ENCODE measurements at regions of chr1 and their contacts with region 1.

Region 1: GRCh38 chr1:201792534-201793305 is 36.2 kb upstream of the IPO9 start:
- DNase-seq: peak; percentile 85
- ATAC-seq: peak; percentile 84

Region 2: DNA sequence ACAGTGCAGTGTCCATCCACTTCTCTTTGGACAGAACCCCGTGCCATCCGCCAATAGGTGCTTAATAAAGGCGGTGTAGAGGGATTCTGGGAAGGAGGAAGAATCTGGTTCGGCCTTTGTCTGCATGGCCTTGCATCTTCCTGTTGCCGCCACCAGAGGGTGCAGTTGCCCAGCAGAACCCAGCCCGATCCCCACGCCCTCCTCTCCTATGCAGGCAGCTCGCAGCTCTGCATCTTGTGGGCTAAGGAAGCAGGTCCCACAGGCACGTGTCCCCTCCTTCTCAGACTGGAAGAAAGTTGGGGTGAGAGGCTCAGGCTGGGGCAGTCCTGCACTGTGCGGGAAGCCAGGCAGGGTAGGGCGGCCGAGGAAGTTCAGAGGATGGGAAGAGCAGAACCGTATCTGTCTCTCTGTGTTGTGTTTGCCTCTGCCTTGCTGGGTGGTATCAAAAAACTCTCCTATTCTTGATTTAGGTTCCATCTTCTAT is 233.0 kb before region 1 on chr1:
- intact Hi-C with region 1: loop called (anchors 5 kb)
- DNase-seq: peak; percentile 90
- ATAC-seq: peak; percentile 90

Region 3: GRCh38 chr1:201709564-201710295 is 83.0 kb before region 1 on chr1:
- intact Hi-C with region 1: loop called (anchors 5 kb)
- DNase-seq: peak; percentile 86
- ATAC-seq: peak; percentile 63

Region 4: GRCh38 chr1:203589171-203589570 is 1796.5 kb after region 1 on chr1:
- intact Hi-C with region 1: loop called (anchors 5 kb)
- DNase-seq: no peak
- ATAC-seq: no peak

Measured in sciatic nerve (tissue), 2 donors.